ENCODE measurements at regions of chr17 and their contacts with region 1.

Region 1: GRCh38 chr17:76567634-76568432 is 17.8 kb downstream of the ST6GALNAC2 start:
- DNase-seq: no peak
- ATAC-seq: no peak
- H3K4me3 Mint-ChIP-seq: no peak overlapping the region
- H3K27ac Mint-ChIP-seq: peak overlapping the region; percentile 30
- H3K4me1 Mint-ChIP-seq: peaks cover 41% of the 10 kb centered on the region
- H3K27me3 Mint-ChIP-seq: no peaks in the 10 kb centered on the region
- CTCF ChIP-seq: no peak

Region 2: DNA sequence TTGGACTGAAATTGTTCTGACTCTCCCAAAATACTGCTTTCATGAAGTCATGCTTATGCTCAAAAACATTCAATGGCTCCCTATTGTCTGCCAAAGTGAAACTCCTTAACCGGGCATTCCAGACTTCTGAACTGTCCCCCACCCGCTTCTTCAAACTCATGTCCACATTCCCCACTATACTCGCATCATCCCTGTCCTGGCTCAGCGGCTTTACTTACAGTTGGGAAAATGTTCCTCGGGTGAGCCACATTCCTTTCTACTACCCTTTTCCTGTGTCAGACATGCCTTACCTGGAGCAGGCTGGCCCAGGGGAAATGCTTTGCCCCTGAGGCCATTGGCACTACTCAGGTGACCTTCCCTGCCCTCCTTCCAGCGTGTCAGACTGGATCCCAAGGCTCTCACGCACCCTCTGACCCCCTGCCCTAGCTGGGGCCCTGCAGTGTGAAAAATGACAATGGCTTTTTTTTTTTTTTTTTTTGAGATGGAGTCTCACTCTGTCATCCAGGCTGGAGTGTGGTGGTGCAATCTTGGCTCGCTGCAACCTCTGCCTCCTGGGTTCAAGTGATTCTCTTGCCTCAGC is 35.7 kb before region 1 on chr17:
- CTCF ChIA-PET with region 1: no interaction called
- POLR2A ChIA-PET with region 1: no interaction called
- intact Hi-C with region 1: no loop called
- DNase-seq: no peak
- ATAC-seq: no peak
- H3K4me3 Mint-ChIP-seq: no peak overlapping the region
- H3K27ac Mint-ChIP-seq: no peak overlapping the region
- H3K4me1 Mint-ChIP-seq: peaks cover 23% of the 10 kb centered on the region
- H3K27me3 Mint-ChIP-seq: peaks cover 3% of the 10 kb centered on the region
- CTCF ChIP-seq: no peak

Region 3: GRCh38 chr17:76585818-76586593 is 18.2 kb after region 1 on chr17 and contains the start of gene ST6GALNAC2:
- CTCF ChIA-PET with region 1: interaction called, 3 read pairs
- POLR2A ChIA-PET with region 1: interaction called, 14 read pairs
- intact Hi-C with region 1: no loop called
- DNase-seq: peak; percentile 50
- ATAC-seq: peak; percentile 89
- H3K4me3 Mint-ChIP-seq: peak within 1 kb of the TSS; percentile 53
- H3K27ac Mint-ChIP-seq: no peak within 1 kb of the TSS
- H3K4me1 Mint-ChIP-seq: peaks cover 10% of the 10 kb centered on the region
- H3K27me3 Mint-ChIP-seq: peaks cover 47% of the 10 kb centered on the region
- CTCF ChIP-seq: no peak
- total RNA-seq, gene ST6GALNAC2: not detected

Measured in activated CD8-positive, alpha-beta T cell treated with anti-CD3 and anti-CD28 coated beads for 36 hours (primary cell).